Esophagus muscularis mucosa (tissue), 4 donors: ENCODE measurements at regions of chr9 and their contacts with region 1.

Region 1: GRCh38 chr9:27414220-27414761 is 109.8 kb upstream of the IFNK start:
- DNase-seq: no peak
- H3K4me3 ChIP-seq: peak overlapping the region in 3 of 4 donors; percentile 27 to 40 (median 31)
- H3K27ac ChIP-seq: peak overlapping the region; percentile 51 to 67 (median 58)
- H3K4me1 ChIP-seq: peaks cover 0 to 24% (median 18%) of the 10 kb centered on the region in 4 donors
- H3K27me3 ChIP-seq: no peaks in the 10 kb centered on the region
- CTCF ChIP-seq: no peak
- EP300 ChIP-seq: no peak
- POLR2A ChIP-seq: no peak

Region 2: DNA sequence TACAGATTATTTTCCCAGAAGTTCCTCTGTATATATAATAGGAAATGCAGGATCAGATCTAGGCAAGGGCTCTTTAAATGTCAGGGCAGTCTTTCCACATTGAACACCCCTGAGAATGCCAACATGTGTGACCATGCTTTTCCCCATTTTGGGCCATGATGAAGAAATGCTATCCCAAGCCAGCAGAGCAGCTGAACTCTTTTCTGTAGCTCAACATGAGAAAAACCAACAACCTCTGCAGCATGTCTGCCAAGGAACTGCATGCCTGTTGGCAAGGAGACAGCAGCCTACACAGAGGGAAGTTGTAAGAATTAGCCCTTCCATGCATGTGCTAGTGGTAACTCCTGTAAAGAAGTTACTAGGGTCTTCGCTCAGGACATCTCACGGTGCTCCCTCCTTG is 100.3 kb after region 1 on chr9:
- intact Hi-C with region 1: loop called (anchors 10 kb)
- DNase-seq: no peak
- H3K4me3 ChIP-seq: no peak overlapping the region
- H3K27ac ChIP-seq: no peak overlapping the region
- H3K4me1 ChIP-seq: peaks cover 0 to 10% (median 7%) of the 10 kb centered on the region in 4 donors
- H3K27me3 ChIP-seq: no peaks in the 10 kb centered on the region
- CTCF ChIP-seq: no peak
- EP300 ChIP-seq: no peak
- POLR2A ChIP-seq: no peak

Region 3: DNA sequence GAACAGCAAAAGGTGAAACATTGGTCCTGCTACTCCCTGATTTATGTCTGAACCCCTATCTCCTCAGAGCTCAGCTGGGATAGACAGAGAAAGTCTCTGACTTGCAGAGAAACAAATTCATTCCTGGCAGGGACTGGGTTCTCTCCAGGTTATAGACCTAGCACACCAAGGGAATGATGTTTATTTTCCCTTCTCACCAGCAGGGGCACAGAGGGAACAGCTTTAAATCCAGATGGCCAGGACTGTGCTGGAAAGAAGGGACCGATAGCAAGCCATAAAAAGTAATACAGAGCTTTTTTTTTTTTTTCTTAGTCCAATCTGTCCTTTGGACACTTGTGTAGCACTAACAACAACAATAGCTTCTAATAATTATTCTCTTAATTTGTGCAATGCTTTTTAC is 300.1 kb after region 1 on chr9:
- intact Hi-C with region 1: no loop called
- DNase-seq: no peak
- H3K4me3 ChIP-seq: no peak overlapping the region
- H3K27ac ChIP-seq: no peak overlapping the region
- H3K4me1 ChIP-seq: no peaks in the 10 kb centered on the region
- H3K27me3 ChIP-seq: no peaks in the 10 kb centered on the region
- CTCF ChIP-seq: no peak
- EP300 ChIP-seq: no peak
- POLR2A ChIP-seq: no peak